ENCODE measurements at regions of chr11 and their contacts with region 1.

Region 1: DNA sequence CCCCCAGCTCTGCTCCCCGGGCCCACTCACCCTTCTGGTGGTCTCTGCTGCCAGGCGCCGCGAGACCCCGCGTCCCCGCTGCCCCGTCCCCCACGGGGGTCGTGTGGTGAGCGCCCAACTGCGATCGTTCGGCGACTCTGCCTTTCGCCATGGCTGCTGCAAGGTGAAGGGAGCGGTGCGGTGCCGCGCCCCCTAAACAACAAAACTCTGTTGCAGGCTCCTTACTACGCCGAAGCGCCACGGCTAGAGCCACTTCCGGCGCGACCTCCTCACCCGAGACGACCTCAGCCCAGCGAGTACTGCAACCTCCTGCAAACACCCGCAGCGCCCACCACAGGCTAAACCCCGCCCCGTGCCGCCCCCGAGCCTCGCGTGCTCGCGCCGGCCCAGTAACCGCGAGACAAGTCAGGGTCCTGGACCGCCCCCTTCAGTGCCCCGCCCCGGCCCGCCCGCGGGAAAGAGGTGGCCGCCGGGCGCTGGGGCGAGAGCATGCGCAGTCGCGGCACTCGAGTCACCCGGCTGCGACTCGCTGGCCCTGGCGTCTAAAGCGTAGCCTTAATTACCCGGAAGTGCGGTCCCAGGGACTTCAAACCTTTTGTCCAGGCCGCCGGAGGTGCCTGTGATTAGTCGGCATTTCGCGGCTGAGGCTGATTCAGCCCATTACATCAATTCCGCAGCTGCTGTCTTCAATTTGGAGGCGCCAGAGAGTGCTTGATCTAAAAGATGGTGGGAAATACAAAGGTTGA is at the start of gene TMEM41B:
- DNase-seq: peak; percentile 92 to 96
- H3K4me3 ChIP-seq: peak within 1 kb of the TSS; percentile 96
- H3K27ac ChIP-seq: peak within 1 kb of the TSS; percentile 87
- H3K4me1 ChIP-seq: peaks cover 19% of the 10 kb centered on the region
- H3K27me3 ChIP-seq: no peaks in the 10 kb centered on the region
- CTCF ChIP-seq: no peak
- total RNA-seq, gene TMEM41B: 58.5 and 65.1 TPM in 2 replicates

Region 2: DNA sequence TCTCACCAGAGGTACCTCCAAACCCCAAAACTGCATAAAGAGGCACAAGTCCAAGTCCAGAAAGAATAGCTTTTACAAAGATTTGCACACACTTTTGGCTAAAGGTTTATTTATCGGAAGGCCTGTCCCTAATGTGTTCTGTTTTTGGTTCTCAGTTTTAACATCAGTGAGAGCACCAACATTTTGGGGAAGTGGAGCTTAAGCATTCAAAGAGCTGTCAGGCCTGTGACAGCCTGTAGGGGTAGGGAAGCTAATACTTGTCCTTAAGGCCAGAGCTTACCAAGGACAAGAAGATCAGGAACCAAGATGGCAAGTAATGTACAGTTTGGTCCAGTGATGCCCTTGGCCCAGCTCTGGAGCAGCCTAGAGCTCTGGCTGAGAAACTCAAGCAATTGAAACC is 184.2 kb before region 1 on chr11:
- CTCF ChIA-PET with region 1: no interaction called
- POLR2A ChIA-PET with region 1: no interaction called
- intact Hi-C with region 1: no loop called
- DNase-seq: no peak
- H3K4me3 ChIP-seq: no peak overlapping the region
- H3K27ac ChIP-seq: no peak overlapping the region
- H3K4me1 ChIP-seq: no peaks in the 10 kb centered on the region
- H3K27me3 ChIP-seq: no peaks in the 10 kb centered on the region
- CTCF ChIP-seq: no peak

Region 3: DNA sequence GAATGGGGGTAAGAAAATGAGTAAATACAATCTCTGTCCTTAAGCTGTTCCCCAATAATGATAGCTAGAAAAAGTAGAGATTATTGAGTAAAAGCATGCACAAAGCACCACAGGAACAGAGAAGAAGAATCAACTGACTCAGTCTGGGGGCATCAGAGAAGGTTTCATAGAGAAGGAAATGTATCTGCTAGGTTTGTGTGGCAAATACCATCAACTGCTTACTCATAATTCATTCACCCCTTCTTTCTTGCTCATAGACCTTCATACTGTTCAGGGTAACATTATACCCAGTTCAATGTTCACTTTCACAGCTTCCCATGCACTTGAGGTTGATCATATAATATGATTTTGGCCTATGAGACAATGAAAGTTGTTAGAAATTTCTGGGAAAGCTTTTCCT is 137.9 kb before region 1 on chr11:
- CTCF ChIA-PET with region 1: no interaction called
- POLR2A ChIA-PET with region 1: interaction called, 15 read pairs
- intact Hi-C with region 1: no loop called
- DNase-seq: no peak
- H3K4me3 ChIP-seq: no peak overlapping the region
- H3K27ac ChIP-seq: no peak overlapping the region
- H3K4me1 ChIP-seq: no peaks in the 10 kb centered on the region
- H3K27me3 ChIP-seq: no peaks in the 10 kb centered on the region
- CTCF ChIP-seq: no peak

Region 4: DNA sequence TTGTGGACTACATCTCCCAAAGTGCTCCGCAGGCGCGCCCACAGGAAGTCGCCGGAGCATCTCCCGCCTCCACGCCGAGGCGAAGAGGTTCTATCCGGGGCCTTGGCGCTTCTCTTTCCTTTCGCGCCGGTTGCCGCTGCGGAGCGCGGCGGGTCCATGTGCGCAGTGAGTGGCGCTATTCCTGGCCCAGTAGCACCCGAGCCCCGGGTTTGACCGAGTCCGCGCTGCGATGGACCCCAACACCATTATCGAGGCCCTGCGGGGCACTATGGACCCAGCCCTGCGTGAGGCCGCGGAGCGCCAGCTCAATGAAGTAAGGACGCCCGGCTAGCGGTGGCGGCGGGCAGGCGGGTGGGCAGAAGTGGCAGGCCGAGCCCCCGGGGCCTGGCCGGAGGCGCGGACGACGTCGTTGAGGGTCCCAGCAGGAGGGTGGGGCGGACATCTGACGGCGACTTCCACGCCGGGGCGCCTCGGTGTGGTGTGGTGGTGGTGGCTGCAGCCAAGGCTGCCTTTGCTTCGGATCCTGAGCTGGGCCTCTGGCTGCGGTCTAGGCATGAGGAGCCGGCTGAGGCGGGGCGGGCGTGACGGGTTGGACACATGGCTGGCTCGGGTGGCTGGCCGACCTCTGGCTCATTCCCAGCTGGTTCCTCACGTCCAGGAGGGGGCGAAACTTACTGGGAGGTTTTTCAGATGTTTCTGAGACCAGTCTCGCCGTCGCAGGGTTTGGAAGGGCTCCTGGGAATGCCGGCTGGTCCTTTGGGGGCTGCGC is 70.3 kb after region 1 on chr11 and contains the start of gene IPO7:
- CTCF ChIA-PET with region 1: no interaction called
- POLR2A ChIA-PET with region 1: interaction called, 6 read pairs
- intact Hi-C with region 1: loop called (anchors 1 kb)
- DNase-seq: peak; percentile 74 to 75
- H3K4me3 ChIP-seq: peak within 1 kb of the TSS; percentile 81
- H3K27ac ChIP-seq: peak within 1 kb of the TSS; percentile 79
- H3K4me1 ChIP-seq: peaks cover 21% of the 10 kb centered on the region
- H3K27me3 ChIP-seq: no peaks in the 10 kb centered on the region
- CTCF ChIP-seq: no peak
- total RNA-seq, gene IPO7: 83.7 and 126 TPM in 2 replicates

Region 5: DNA sequence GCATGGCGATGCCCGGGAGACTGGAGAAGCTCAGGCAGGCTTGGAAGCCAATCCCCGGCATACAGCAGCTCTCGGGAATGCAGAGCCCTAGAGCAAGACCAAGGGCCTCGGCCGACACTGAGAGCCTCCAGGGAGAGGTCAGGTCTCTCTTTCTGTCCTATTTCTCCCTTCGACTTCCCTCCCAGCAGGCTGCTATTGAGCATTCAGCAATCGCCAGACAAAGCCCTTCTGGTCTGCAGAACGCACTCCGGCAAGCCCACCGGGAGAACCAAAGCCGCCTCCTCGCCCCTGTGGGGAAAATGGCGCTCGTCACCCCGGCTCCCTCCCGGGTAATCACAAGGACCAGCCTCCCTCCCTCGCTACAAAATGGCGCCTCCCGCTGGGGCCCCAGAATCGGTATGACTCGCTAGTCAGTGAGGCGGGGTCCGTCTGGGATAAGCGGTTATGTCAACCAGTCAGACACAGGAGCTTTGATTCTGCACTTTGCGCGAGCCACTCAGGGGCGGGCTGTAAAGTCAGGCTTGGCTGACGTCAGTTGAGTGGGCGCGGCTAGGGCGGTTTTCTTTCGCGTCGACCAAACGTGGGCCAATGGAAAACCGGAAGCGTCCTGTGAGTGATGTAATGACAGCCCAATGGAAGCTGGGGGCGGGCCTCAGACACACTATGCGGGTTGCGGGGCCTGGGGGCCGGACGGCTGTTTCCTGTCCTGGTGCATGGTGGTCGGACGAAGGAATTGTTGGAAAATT is 146.0 kb after region 1 on chr11 and contains the start of gene ZNF143:
- CTCF ChIA-PET with region 1: no interaction called
- POLR2A ChIA-PET with region 1: no interaction called
- intact Hi-C with region 1: loop called (anchors 1 kb)
- DNase-seq: peak; percentile 97
- H3K4me3 ChIP-seq: peak within 1 kb of the TSS; percentile 88
- H3K27ac ChIP-seq: peak within 1 kb of the TSS; percentile 96
- H3K4me1 ChIP-seq: peaks cover 22% of the 10 kb centered on the region
- H3K27me3 ChIP-seq: no peaks in the 10 kb centered on the region
- CTCF ChIP-seq: no peak
- total RNA-seq, gene ZNF143: 14.7 and 16.5 TPM in 2 replicates

Measured in PC-9 (cell line).